Dendritic cell treated with granulocyte-macrophage colony-stimulating factor and Interleukin-4, amounts not matched to agents 40 ng/mL and 50 ng/mL, for 4 days (primary cell): ENCODE measurements at regions of chr7 and their contacts with region 1.

Region 1: DNA sequence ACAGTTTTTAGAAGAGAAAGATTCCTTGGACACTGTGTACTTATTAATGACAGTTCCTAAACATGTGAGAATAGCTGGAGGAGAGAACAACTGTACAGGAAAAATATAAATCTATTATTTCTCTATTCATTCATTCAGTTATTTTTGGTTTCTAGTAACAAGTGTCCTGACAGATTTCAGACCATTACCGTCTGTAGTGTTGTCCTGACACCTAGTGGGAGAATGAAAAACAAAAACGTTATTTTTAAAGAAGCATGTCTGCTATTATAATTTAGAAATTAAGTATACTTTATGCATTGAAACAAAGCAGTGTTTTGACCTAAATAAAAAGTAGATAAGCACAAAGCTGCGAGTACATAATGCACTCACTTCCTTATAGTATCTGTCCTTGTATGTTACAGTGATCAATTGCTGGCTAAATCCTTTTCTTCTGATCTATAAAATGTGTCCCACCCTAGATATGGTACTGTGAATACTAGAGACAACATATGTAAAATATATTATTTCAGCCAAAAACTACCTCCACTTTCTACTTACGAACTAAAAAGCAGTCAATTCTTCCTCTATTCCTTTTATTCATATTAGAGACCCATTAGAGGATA is 575.6 kb downstream of the ARL4A start:
- H3K4me3 Mint-ChIP-seq: no peak overlapping the region
- H3K27ac Mint-ChIP-seq: no peak overlapping the region
- H3K4me1 Mint-ChIP-seq: no peaks in the 10 kb centered on the region
- H3K27me3 Mint-ChIP-seq: peaks cover 2% of the 10 kb centered on the region

Region 2: DNA sequence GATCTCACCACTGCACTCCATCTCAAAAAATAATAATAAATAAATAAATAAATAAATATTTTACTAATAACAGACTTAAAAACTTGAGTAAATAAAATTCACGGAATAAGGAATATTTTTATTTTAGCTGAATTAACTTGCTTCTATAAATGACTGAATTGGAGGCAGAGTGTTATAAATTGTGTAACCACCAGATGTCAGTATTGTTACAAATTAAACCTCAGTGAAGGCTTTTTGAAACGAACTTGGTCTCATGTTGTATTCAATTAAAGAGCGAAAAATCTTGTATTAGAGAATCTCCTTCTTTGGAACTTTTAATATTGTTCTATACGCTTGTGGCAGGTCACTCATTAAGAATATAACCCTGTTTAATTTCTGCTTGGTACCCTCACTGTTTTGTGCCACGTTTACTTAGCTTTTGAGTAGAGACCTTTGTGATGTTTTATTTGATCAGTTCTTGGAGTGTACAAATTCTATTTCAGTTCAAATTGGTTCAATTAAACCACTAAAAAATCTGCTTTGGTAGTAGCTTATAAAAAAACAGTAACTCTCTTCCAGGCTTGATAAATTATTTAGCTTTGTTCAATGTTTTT is 738.1 kb before region 1 on chr7:
- intact Hi-C with region 1: loop called (anchors 5 kb)
- H3K4me3 Mint-ChIP-seq: no peak overlapping the region
- H3K27ac Mint-ChIP-seq: no peak overlapping the region
- H3K4me1 Mint-ChIP-seq: no peaks in the 10 kb centered on the region
- H3K27me3 Mint-ChIP-seq: peaks cover 2% of the 10 kb centered on the region

Region 3: DNA sequence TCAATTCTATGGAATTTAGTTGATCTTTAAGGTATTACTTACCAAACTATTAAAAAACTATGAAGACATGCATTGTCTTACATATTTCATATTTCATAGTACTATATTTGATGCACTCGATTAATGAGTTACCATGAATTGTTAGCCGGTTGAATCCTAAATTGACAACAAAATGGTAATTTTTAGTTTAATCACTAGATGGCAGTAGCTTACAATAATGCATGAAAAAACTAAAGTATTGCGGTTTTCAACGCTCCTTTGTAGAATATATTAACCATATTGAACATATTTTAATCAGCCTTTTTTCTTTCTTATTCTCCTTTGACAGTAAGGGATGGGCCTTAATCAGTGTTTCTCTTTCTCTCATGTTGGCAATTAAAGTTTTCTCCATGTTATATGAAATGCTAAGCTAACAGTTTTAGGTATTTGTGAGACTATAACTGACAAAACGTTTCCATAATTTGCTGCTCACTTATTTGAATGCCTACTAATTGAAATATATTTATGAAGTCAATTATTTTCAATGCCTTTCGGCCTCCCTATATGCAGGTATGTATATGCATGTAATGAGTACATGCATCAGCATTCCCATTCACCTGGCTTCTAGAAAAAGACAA is 624.1 kb before region 1 on chr7:
- intact Hi-C with region 1: loop called (anchors 1 kb)
- H3K4me3 Mint-ChIP-seq: no peak overlapping the region
- H3K27ac Mint-ChIP-seq: no peak overlapping the region
- H3K4me1 Mint-ChIP-seq: peaks cover 11% of the 10 kb centered on the region
- H3K27me3 Mint-ChIP-seq: no peaks in the 10 kb centered on the region